CD14-positive monocyte (primary cell): ENCODE measurements at regions of chr10 and their contacts with region 1.

Region 1: GRCh38 chr10:114876602-114877300 is 55.2 kb downstream of the FHIP2A start:
- DNase-seq: peak; percentile 5 to 37 (median 27)
- H3K4me3 ChIP-seq: peak overlapping the region in 1 of 3 experiments; percentile 37
- H3K4me3 Mint-ChIP-seq: peak overlapping the region in 1 of 2 donors; percentile 42
- H3K27ac ChIP-seq: no peak overlapping the region
- H3K27ac Mint-ChIP-seq: no peak overlapping the region
- H3K4me1 ChIP-seq: peaks cover 19 to 31% of the 10 kb centered on the region in 2 donors
- H3K4me1 Mint-ChIP-seq: peaks cover 37% of the 10 kb centered on the region
- H3K27me3 ChIP-seq: no peaks in the 10 kb centered on the region
- H3K27me3 Mint-ChIP-seq: peaks cover 2 to 7% (median 2%) of the 10 kb centered on the region in 3 donors
- CTCF ChIP-seq: peak; percentile 54

Region 2: DNA sequence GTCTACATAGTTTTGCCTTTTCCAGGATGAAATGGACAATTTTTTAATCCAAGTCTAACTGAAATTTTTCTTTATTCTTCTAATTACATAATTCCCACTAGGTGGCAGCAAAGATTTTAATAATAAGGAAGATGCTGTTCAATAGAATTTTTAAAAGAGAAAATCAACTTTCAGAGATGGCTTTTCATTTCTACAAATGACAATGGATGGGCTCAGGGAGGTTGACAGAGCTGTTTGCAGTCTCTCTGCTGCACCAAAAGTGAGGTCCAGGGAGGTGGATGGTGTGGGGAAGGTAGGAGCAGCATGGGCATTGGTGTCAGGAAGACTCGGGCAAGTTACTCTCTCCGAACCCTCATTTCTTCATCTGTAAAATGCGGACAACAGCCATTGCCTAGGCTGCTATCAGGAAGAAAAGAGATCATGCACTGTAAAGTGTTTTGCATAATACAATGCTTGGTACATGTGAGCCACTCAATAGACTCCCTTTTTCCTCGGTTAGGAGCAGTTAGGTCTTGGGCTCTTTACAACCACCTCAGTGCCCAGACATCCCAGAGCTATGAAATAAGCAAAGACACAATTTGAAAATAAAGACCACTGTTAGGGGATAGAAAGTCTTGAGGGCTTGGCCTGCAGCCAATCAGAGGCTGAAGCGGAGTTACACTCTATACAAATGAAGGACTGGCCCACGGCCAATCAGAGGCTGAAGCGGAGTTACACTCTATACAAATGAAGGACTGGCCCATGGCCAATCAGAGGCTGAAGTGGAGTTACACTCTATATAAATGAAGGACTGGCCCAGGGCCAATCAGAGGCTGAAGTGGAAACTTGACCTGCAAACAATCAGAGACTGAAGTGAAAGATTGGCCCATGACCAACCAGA is 325.8 kb before region 1 on chr10:
- intact Hi-C with region 1: loop called in 1 of 2 experiments (anchors 5 kb)
- DNase-seq: peak in 1 of 3 donors; percentile 3
- H3K4me3 ChIP-seq: no peak overlapping the region
- H3K4me3 Mint-ChIP-seq: no peak overlapping the region
- H3K27ac ChIP-seq: no peak overlapping the region
- H3K27ac Mint-ChIP-seq: no peak overlapping the region
- H3K4me1 ChIP-seq: no peaks in the 10 kb centered on the region
- H3K4me1 Mint-ChIP-seq: peaks cover 8% of the 10 kb centered on the region
- H3K27me3 ChIP-seq: no peaks in the 10 kb centered on the region
- H3K27me3 Mint-ChIP-seq: peaks cover 3 to 9% (median 8%) of the 10 kb centered on the region in 3 donors
- CTCF ChIP-seq: peak; percentile 70